ENCODE measurements at regions of chr11 and their contacts with region 1.

Region 1: GRCh38 chr11:1515082-1516060 is 28.8 kb upstream of the MOB2 start:
- ATAC-seq: peak; percentile 92 to 97 (median 96)
- H3K4me3 ChIP-seq: no peak overlapping the region
- H3K27ac ChIP-seq: no peak overlapping the region
- H3K4me1 ChIP-seq: peaks cover 13 to 20% of the 10 kb centered on the region in 2 donors

Region 2: DNA sequence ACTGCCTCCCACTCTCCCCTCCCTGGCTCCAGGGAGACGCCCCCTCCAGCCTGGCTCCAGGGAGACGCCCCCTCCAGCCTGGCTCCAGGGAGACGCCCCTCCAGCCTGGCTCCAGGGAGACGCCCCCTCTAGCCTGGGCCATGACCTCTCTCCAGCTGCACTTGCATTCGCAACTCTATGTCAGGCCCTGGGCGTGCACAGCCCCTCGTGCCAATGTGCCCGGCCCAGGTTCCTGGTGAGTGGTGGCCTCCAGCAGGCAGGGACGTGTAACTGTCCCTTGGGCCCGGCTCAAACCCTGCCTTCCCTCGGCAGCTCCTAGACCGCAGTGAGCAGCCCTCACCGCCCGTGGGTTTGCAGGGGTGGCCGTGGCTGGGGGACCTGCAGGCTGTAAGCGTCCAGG is 485.7 kb before region 1 on chr11:
- in situ Hi-C with region 1: no loop called
- ATAC-seq: peak in 6 of 8 experiments; percentile 4 to 79 (median 34)
- H3K4me3 ChIP-seq: no peak overlapping the region
- H3K27ac ChIP-seq: no peak overlapping the region
- H3K4me1 ChIP-seq: peaks cover 0 to 4% of the 10 kb centered on the region in 2 donors

Region 3: GRCh38 chr11:1202776-1203504 is 312.4 kb before region 1 on chr11:
- in situ Hi-C with region 1: loop called in 4 of 9 experiments (anchors 25 kb)
- ATAC-seq: peak; percentile 85 to 94 (median 90)
- H3K4me3 ChIP-seq: no peak overlapping the region
- H3K27ac ChIP-seq: no peak overlapping the region
- H3K4me1 ChIP-seq: no peaks in the 10 kb centered on the region

Region 4: DNA sequence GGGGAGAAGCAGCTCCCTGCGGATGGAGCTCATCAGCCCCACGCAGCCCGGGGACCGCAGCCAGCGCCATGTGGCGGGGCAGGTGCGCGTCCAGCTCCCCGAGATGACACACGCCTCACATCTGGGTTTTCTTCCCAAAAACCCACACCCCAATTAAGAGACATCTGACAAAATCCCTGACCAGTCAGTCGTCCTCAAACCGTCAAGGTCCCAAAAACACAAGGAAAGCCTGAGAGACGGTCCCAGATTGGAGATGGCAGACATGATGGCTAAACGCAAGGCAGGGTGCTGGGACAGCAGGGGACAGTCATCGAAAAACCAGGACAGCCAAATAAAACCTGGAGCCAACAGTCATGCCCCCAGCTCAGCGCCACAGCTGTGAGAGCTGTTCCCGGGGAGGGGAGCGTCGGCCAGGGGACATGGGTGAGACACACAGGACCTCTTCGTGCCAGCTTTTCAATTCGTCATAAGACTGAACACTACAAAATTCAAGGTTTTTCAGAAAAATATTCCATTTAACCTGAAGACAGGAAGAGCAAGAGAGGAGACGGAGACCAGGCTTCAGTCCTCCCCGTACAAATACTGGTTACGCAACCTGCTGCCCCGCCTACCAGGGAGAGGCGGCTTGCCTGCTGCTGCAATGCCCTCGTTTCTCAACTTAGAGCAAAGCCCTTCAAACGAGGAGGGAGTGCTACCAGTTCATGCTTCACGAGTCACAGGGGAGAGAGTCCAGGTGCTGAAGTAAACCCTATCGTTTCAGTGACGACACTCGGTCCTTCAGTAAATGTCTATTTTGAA is 216.5 kb before region 1 on chr11:
- in situ Hi-C with region 1: loop called in 2 of 9 experiments (anchors 25 kb)
- ATAC-seq: peak in 7 of 8 experiments; percentile 12 to 97 (median 42)
- H3K4me3 ChIP-seq: no peak overlapping the region
- H3K27ac ChIP-seq: no peak overlapping the region
- H3K4me1 ChIP-seq: peaks cover 5 to 16% of the 10 kb centered on the region in 2 donors

Region 5: DNA sequence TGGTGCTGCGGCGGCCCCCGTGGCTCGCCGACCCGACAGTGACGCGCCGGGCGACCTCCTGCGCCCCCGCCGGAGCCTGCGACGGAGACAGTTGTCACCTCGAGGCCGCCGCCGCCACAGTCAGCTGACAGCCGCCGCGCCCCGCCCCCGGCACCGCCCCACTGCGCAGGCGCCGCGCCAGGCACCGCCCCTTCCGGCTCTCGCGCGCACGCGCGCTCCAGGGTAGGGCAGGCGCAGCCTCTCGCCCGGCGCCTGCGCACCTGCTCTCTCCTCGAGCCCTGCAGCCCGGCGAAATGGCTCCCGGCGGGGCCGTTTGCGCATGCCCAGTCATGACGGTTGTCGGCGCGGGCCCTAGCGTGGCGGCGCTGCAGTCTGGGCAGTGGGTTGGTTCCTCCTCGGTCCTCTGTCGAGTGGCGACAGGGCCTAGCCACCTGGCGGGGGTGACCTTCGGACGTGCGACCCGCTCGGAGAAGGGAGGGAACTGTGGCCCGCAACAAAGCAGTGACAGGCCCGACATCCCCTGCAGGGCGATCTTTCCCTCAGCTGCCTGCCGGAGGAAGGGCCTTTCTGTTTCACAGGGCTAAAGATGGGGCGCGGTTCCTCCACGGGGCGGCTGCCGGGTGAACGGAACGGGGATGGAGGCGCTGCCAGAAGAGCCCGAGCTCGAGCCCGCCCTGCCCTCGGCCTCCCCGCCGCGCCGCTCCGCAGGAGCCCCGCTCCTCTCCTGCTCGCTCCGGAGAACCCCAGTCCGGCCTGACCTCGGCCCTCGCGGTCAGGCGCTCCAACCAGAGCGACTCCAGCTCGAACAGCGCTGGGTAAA is 205.7 kb before region 1 on chr11 and contains the start of gene TOLLIP:
- in situ Hi-C with region 1: loop called in 1 of 9 experiments (anchors 25 kb)
- ATAC-seq: peak; percentile 85 to 95 (median 94)
- H3K4me3 ChIP-seq: peak within 1 kb of the TSS; percentile 58 to 95 (median 67)
- H3K27ac ChIP-seq: peak within 1 kb of the TSS; percentile 76 to 88
- H3K4me1 ChIP-seq: peaks cover 11% of the 10 kb centered on the region in 2 donors
- total RNA-seq, gene TOLLIP: 11.5 to 27.5 (median 21.1) TPM

Region 6: GRCh38 chr11:2269601-2270321 is 754.4 kb after region 1 on chr11:
- in situ Hi-C with region 1: no loop called
- ATAC-seq: peak; percentile 31 to 85 (median 64)
- H3K4me3 ChIP-seq: peak overlapping the region in 4 of 5 donors; percentile 15 to 41 (median 24)
- H3K27ac ChIP-seq: no peak overlapping the region
- H3K4me1 ChIP-seq: no peaks in the 10 kb centered on the region